GM12878 (cell line): ENCODE measurements at regions of chr10 and their contacts with region 1.

Region 1: GRCh38 chr10:71383972-71384687 is 12.6 kb upstream of the CDH23 start:
- DNase-seq: no peak
- ATAC-seq: peak; percentile 98
- H3K4me3 ChIP-seq: no peak overlapping the region
- H3K27ac ChIP-seq: no peak overlapping the region
- H3K4me1 ChIP-seq: no peaks in the 10 kb centered on the region
- H3K27me3 ChIP-seq: peaks cover 0 to 3% of the 10 kb centered on the region in 2 experiments; a peak in 1 of 4 replicates
- CTCF ChIP-seq: peak; percentile 95 to 97 (median 95)
- EP300 ChIP-seq: no peak
- POLR2A ChIP-seq: no peak
- RAD21 ChIP-seq: peak; percentile 86

Region 2: GRCh38 chr10:71234970-71235685 is 149.0 kb before region 1 on chr10:
- CTCF ChIA-PET with region 1: no interaction called
- POLR2A ChIA-PET with region 1: no interaction called
- RAD21 ChIA-PET with region 1: no interaction called
- SMC1A ChIA-PET with region 1: no interaction called
- in situ Hi-C with region 1: no loop called
- intact Hi-C with region 1: no loop called
- DNase-seq: no peak
- ATAC-seq: no peak
- H3K4me3 ChIP-seq: no peak overlapping the region
- H3K27ac ChIP-seq: no peak overlapping the region
- H3K4me1 ChIP-seq: no peaks in the 10 kb centered on the region
- H3K27me3 ChIP-seq: peaks cover 0 to 2% of the 10 kb centered on the region in 2 experiments; a peak in 3 of 4 replicates
- CTCF ChIP-seq: no peak
- EP300 ChIP-seq: no peak
- POLR2A ChIP-seq: no peak
- RAD21 ChIP-seq: no peak

Region 3: GRCh38 chr10:71314028-71314693 is 70.0 kb before region 1 on chr10:
- CTCF ChIA-PET with region 1: interaction called, 359 read pairs
- POLR2A ChIA-PET with region 1: interaction called, 26 read pairs
- RAD21 ChIA-PET with region 1: interaction called, 77 read pairs
- SMC1A ChIA-PET with region 1: interaction called, 249 read pairs
- in situ Hi-C with region 1: no loop called
- intact Hi-C with region 1: no loop called
- DNase-seq: no peak
- ATAC-seq: peak; percentile 55
- H3K4me3 ChIP-seq: no peak overlapping the region
- H3K27ac ChIP-seq: no peak overlapping the region
- H3K4me1 ChIP-seq: peaks cover 12% of the 10 kb centered on the region
- H3K27me3 ChIP-seq: no peaks in the 10 kb centered on the region
- CTCF ChIP-seq: peak; percentile 62 to 91 (median 76)
- EP300 ChIP-seq: no peak
- POLR2A ChIP-seq: no peak
- RAD21 ChIP-seq: peak; percentile 74

Region 4: GRCh38 chr10:71371750-71372166 is 12.4 kb before region 1 on chr10:
- CTCF ChIA-PET with region 1: interaction called, 10 read pairs
- POLR2A ChIA-PET with region 1: interaction called, 4 read pairs
- RAD21 ChIA-PET with region 1: interaction called, 11 read pairs
- SMC1A ChIA-PET with region 1: interaction called, 10 read pairs
- in situ Hi-C with region 1: no loop called
- intact Hi-C with region 1: no loop called
- DNase-seq: peak; percentile 56
- ATAC-seq: peak; percentile 65
- H3K4me3 ChIP-seq: no peak overlapping the region
- H3K27ac ChIP-seq: peak overlapping the region; percentile 93
- H3K4me1 ChIP-seq: peaks cover 58% of the 10 kb centered on the region
- H3K27me3 ChIP-seq: no peaks in the 10 kb centered on the region
- CTCF ChIP-seq: no peak
- EP300 ChIP-seq: no peak; a peak in 1 of 4 replicates
- POLR2A ChIP-seq: no peak
- RAD21 ChIP-seq: no peak